ENCODE measurements at regions of chr9 and their contacts with region 1.

Region 1: GRCh38 chr9:111873901-111874300 is 22.7 kb upstream of the UGCG start:
- DNase-seq: no peak
- ATAC-seq: no peak
- H3K4me3 ChIP-seq: no peak overlapping the region
- H3K27ac ChIP-seq: no peak overlapping the region
- H3K4me1 ChIP-seq: no peaks in the 10 kb centered on the region
- H3K27me3 ChIP-seq: no peaks in the 10 kb centered on the region
- CTCF ChIP-seq: no peak

Region 2: GRCh38 chr9:111857609-111858211 is 16.2 kb before region 1 on chr9:
- CTCF ChIA-PET with region 1: no interaction called
- POLR2A ChIA-PET with region 1: no interaction called
- in situ Hi-C with region 1: no loop called
- intact Hi-C with region 1: no loop called
- DNase-seq: no peak
- ATAC-seq: no peak
- H3K4me3 ChIP-seq: no peak overlapping the region
- H3K27ac ChIP-seq: no peak overlapping the region
- H3K4me1 ChIP-seq: no peaks in the 10 kb centered on the region
- H3K27me3 ChIP-seq: no peaks in the 10 kb centered on the region
- CTCF ChIP-seq: no peak

Region 3: GRCh38 chr9:111891910-111892499 is 18.1 kb after region 1 on chr9:
- CTCF ChIA-PET with region 1: no interaction called
- POLR2A ChIA-PET with region 1: no interaction called
- in situ Hi-C with region 1: no loop called
- intact Hi-C with region 1: loop called (anchors 1 kb)
- DNase-seq: no peak
- ATAC-seq: no peak
- H3K4me3 ChIP-seq: no peak overlapping the region
- H3K27ac ChIP-seq: peak overlapping the region; percentile 52; the same call in 1 of the 2 replicates
- H3K4me1 ChIP-seq: peaks cover 11% of the 10 kb centered on the region
- H3K27me3 ChIP-seq: no peaks in the 10 kb centered on the region
- CTCF ChIP-seq: no peak

Measured in Panc1 (cell line).